A673 (cell line): ENCODE measurements at regions of chr13 and their contacts with region 1.

Region 1: GRCh38 chr13:24270639-24271141 is 38.7 kb upstream of the C1QTNF9 start:
- DNase-seq: peak; percentile 74
- H3K4me3 ChIP-seq: peak overlapping the region; percentile 53
- H3K27ac ChIP-seq: peak overlapping the region; percentile 97
- H3K4me1 ChIP-seq: peaks cover 32% of the 10 kb centered on the region
- H3K27me3 ChIP-seq: no peaks in the 10 kb centered on the region
- CTCF ChIP-seq: peak; percentile 24; the same call in 1 of the 2 replicates

Region 2: DNA sequence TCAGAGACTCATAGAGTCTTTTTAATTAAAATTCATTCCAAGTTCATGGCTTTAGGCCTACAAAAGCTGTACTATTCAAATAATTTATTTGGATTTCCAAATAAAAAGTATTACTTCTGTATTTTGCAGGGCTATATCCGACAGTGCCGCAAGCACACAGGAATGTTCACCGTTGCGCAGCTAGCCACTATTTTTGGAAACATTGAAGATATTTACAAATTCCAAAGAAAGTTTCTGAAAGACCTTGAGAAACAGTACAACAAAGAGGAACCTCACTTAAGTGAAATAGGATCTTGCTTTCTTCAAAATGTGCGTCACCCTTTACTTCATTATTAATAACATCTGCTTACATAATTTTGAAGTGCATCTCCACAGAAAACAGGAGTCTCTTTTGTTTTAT is 18.2 kb after region 1 on chr13:
- CTCF ChIA-PET with region 1: no interaction called
- POLR2A ChIA-PET with region 1: interaction called, 10 read pairs
- intact Hi-C with region 1: no loop called
- DNase-seq: no peak
- H3K4me3 ChIP-seq: no peak overlapping the region
- H3K27ac ChIP-seq: no peak overlapping the region
- H3K4me1 ChIP-seq: peaks cover 20% of the 10 kb centered on the region
- H3K27me3 ChIP-seq: no peaks in the 10 kb centered on the region
- CTCF ChIP-seq: no peak

Region 3: GRCh38 chr13:24489721-24490120 is 219.0 kb after region 1 on chr13:
- CTCF ChIA-PET with region 1: no interaction called
- POLR2A ChIA-PET with region 1: no interaction called
- intact Hi-C with region 1: no loop called
- DNase-seq: no peak
- H3K4me3 ChIP-seq: no peak overlapping the region
- H3K27ac ChIP-seq: no peak overlapping the region
- H3K4me1 ChIP-seq: no peaks in the 10 kb centered on the region
- H3K27me3 ChIP-seq: no peaks in the 10 kb centered on the region
- CTCF ChIP-seq: no peak

Region 4: DNA sequence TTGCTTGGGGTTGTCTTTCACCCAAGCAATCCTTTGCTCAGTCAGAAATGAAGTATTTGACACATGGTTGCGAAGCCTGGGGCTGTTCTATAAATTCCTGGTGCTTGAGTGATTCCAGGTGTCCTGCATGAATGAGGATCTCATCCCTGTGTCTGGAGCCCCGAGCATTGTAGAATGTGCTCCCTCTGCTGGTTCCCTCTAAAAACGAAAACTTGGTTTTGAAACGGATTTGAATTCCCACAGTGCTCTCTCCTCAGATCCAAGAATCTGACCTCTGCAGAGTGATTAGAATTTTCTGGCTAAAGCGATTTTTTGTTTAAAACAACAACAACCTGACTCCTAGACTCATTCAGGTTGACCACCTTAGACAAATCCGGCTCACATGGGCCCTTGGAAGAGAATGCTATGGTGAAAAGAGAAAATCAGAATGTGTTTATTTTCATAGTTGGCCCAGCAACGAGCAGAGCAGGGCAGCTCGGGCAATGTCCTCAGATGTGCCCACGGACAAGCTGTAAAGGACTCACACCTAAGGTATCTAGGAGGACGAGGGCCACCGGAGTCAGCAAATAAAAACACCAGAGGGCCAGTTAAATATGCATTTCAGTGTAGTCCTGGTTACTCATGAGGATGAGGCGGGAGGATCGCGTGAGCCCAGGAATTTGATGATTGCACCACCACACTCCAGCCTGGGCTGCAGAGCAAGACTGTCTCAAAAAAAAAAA is 400.9 kb after region 1 on chr13:
- CTCF ChIA-PET with region 1: no interaction called
- POLR2A ChIA-PET with region 1: no interaction called
- intact Hi-C with region 1: no loop called
- DNase-seq: peak; percentile 79
- H3K4me3 ChIP-seq: no peak overlapping the region
- H3K27ac ChIP-seq: no peak overlapping the region
- H3K4me1 ChIP-seq: no peaks in the 10 kb centered on the region
- H3K27me3 ChIP-seq: no peaks in the 10 kb centered on the region
- CTCF ChIP-seq: peak; percentile 73